ENCODE measurements at regions of chr11 and their contacts with region 1.

Region 1: GRCh38 chr11:11621573-11622319 is at the start of gene GALNT18:
- DNase-seq: peak; percentile 93
- ATAC-seq: peak; percentile 97
- total RNA-seq, gene GALNT18: 20.1 to 21.5 TPM

Region 2: DNA sequence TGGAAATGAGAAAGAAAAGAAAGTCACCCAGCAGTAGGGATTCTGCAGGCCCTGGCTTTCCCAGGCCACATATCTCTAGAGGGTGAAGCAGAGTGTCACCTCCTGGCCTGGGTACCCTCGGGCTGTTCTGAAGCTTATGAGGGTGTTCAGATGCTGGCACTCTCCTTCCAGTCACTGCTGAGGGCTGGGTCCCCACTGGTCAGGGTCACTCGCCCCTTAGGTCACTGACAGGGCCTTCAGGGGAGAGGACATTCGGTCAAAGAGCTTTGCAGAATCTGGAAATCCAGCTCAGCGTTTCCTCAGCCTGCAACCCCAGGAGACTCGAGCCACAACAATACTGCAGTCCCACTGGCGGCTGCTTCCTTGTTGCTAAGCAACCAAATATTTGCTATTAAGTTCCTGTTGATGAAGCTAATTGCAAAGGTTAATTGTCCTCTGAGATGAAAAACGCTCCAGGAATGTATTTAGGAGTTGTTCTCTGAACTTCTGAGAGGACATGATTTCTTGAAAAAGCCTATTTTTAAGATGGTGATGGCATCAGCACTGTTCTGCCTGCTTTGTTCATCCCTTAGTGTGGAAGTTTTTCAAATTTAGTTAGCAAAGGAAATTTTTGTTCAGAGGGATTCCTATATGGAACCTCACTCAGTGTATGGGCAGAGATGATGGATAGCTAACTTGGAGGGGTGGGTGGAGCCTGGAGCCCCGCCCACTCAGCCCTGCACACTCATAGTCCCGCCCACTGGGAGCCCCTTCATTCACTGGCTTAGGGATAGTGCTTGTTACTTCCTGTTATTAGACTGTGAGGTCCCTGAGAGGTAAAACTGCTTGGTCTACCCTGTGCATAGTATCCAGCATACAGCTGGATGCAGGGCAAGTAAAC is 377.9 kb before region 1 on chr11:
- intact Hi-C with region 1: no loop called
- DNase-seq: peak; percentile 57
- ATAC-seq: peak; percentile 75 to 77

Region 3: GRCh38 chr11:11400635-11401232 is 221.0 kb before region 1 on chr11:
- intact Hi-C with region 1: loop called (anchors 5 to 10 kb)
- DNase-seq: no peak
- ATAC-seq: no peak

Region 4: GRCh38 chr11:11538277-11538960 is 83.3 kb before region 1 on chr11:
- intact Hi-C with region 1: loop called in 1 of 2 experiments (anchors 5 kb)
- DNase-seq: peak; percentile 68
- ATAC-seq: peak; percentile 66 to 89

Region 5: DNA sequence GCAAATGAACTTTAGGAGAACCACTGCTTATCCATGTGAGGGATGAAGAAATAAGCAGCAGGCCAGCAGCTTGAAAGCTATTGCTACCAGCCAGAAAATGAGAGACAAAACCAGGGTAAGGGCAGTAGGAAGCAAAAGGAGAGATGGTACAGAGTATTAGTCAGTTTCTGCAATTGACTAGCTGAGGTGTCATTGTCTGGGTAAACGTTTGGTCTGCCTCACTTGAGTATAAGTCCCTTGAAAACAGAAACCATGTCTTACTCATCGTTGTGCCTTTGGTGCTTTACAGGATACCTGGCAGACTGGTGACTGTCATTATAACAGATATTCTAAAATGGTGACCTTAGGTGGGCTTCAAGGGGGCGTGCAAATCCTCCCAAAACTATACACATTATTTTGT is 156.2 kb after region 1 on chr11:
- intact Hi-C with region 1: loop called in 1 of 2 experiments (anchors 10 kb)
- DNase-seq: no peak
- ATAC-seq: no peak

Measured in left cardiac atrium (tissue), 4 donors.